ENCODE measurements at regions of chr12 and their contacts with region 1.

Region 1: DNA sequence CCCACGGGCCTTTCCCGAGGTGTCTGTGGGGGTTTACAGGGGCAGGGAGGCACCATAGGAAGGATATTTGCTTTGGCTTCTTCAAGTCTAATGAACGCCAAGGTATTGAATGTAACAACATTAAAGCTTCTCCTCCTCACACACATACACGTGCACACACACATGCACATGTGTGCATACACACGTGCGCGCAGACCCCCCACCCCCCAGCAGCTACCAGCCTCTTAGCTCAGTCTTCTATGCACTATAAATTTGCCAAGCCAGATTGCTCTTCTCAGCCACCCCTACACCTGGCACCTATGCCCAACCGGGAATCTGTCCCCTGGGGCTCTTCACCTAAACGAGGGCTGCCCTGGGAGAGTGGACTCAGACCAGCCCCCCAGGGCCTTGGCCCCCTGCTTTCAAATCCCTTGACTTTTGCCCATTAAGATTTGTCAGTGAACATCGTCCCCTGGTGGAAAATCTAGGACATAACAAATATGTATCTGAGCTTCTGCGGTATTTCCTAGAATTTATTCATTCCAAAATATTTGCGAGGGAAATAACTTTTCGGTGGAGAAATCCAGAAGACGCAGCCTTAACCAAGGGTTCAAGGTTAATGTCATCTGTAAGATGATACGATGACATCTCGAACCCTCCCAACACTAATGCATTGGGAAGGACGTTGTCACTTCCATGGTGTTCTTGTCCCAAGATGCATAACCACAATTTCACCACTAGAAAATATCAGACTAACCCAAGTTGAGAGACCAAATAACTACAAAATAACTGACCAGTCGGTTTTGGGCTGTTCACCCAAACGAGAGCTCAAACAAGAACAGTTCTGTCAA is 330.4 kb downstream of the MED13L start:
- DNase-seq: no peak
- H3K4me3 ChIP-seq: no peak overlapping the region
- H3K27ac ChIP-seq: no peak overlapping the region
- H3K4me1 ChIP-seq: no peaks in the 10 kb centered on the region
- H3K27me3 ChIP-seq: no peaks in the 10 kb centered on the region
- CTCF ChIP-seq: peak; percentile 31 to 39
- POLR2A ChIP-seq: no peak

Region 2: GRCh38 chr12:114625294-114625851 is 1321.7 kb before region 1 on chr12:
- CTCF ChIA-PET with region 1: interaction called, 17 read pairs
- POLR2A ChIA-PET with region 1: no interaction called
- dilution Hi-C with region 1: no loop called
- intact Hi-C with region 1: no loop called
- DNase-seq: peak; percentile 29
- H3K4me3 ChIP-seq: no peak overlapping the region
- H3K27ac ChIP-seq: no peak overlapping the region
- H3K4me1 ChIP-seq: no peaks in the 10 kb centered on the region
- H3K27me3 ChIP-seq: no peaks in the 10 kb centered on the region
- CTCF ChIP-seq: peak; percentile 57 to 63
- POLR2A ChIP-seq: no peak

Region 3: GRCh38 chr12:115973968-115974724 is 27.1 kb after region 1 on chr12:
- CTCF ChIA-PET with region 1: interaction called, 12 read pairs
- POLR2A ChIA-PET with region 1: no interaction called
- dilution Hi-C with region 1: no loop called
- intact Hi-C with region 1: no loop called
- DNase-seq: peak; percentile 58
- H3K4me3 ChIP-seq: no peak overlapping the region
- H3K27ac ChIP-seq: peak overlapping the region; percentile 17
- H3K4me1 ChIP-seq: peaks cover 20% of the 10 kb centered on the region
- H3K27me3 ChIP-seq: no peaks in the 10 kb centered on the region
- CTCF ChIP-seq: no peak
- POLR2A ChIP-seq: no peak

Measured in endothelial cell of umbilical vein (primary cell).